ENCODE measurements at regions of chr14 and their contacts with region 1.

Region 1: GRCh38 chr14:61837336-61838229 is 75.4 kb downstream of the SNAPC1 start:
- DNase-seq: peak; percentile 83
- H3K4me3 ChIP-seq: no peak overlapping the region
- H3K27ac ChIP-seq: no peak overlapping the region
- H3K4me1 ChIP-seq: peaks cover 10% of the 10 kb centered on the region
- H3K27me3 ChIP-seq: no peaks in the 10 kb centered on the region
- CTCF ChIP-seq: peak; percentile 88

Region 2: DNA sequence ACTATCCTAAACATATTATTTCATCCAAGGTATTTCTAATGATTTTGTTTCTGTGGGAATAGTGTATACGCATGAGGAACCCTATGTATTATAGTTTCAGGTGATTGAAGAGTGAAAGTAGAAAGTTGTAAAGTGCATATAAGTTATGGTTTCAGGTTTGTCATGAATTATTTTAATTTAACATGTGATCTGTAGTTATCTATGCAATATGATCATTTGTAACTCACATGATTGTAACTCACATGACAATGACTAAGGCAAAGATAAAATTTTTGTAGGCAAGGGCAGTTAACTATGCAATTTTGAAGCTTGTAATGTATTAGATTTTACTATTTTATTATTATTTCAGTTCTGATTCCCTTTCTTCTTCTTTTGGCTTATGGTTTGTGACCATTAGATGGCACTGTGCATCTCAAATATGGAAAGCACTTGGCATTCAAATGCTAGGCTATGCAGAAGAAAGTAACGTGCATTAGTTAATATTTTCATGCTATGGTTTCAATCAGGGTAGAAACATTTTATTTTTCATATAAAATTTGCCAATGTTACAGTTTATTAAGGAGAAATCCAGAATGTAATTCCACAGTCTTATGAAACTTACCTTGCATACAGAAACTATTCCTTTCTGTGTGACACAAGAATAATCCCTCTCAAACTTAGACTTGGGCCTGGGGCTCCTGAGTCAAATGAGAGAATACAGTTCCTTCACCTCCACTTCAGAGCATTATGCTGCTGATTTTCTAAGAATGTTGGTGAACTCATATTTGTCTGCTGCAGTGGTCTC is 540.7 kb before region 1 on chr14:
- CTCF ChIA-PET with region 1: no interaction called
- POLR2A ChIA-PET with region 1: no interaction called
- intact Hi-C with region 1: loop called (anchors 5 kb)
- DNase-seq: peak; percentile 55
- H3K4me3 ChIP-seq: no peak overlapping the region
- H3K27ac ChIP-seq: no peak overlapping the region
- H3K4me1 ChIP-seq: no peaks in the 10 kb centered on the region
- H3K27me3 ChIP-seq: no peaks in the 10 kb centered on the region
- CTCF ChIP-seq: peak; percentile 81

Region 3: GRCh38 chr14:61461808-61462275 is 375.7 kb before region 1 on chr14:
- CTCF ChIA-PET with region 1: interaction called, 7 read pairs
- POLR2A ChIA-PET with region 1: no interaction called
- intact Hi-C with region 1: loop called (anchors 1 kb)
- DNase-seq: peak; percentile 80
- H3K4me3 ChIP-seq: no peak overlapping the region
- H3K27ac ChIP-seq: no peak overlapping the region
- H3K4me1 ChIP-seq: peaks cover 14% of the 10 kb centered on the region
- H3K27me3 ChIP-seq: no peaks in the 10 kb centered on the region
- CTCF ChIP-seq: peak; percentile 76

Region 4: GRCh38 chr14:61780125-61780524 is 57.5 kb before region 1 on chr14:
- CTCF ChIA-PET with region 1: no interaction called
- POLR2A ChIA-PET with region 1: interaction called, 16 read pairs
- intact Hi-C with region 1: no loop called
- DNase-seq: no peak
- H3K4me3 ChIP-seq: no peak overlapping the region
- H3K27ac ChIP-seq: no peak overlapping the region
- H3K4me1 ChIP-seq: no peaks in the 10 kb centered on the region
- H3K27me3 ChIP-seq: no peaks in the 10 kb centered on the region
- CTCF ChIP-seq: no peak